Transverse colon (tissue), 4 donors: ENCODE measurements at regions of chr3 and their contacts with region 1.

Region 1: GRCh38 chr3:58414538-58415197 is 19.0 kb downstream of the PDHB start:
- DNase-seq: peak; percentile 31
- H3K4me3 ChIP-seq: no peak overlapping the region
- H3K27ac ChIP-seq: peak overlapping the region in 1 of 4 donors; percentile 19
- H3K4me1 ChIP-seq: peaks cover 2 to 35% (median 13%) of the 10 kb centered on the region in 4 donors
- H3K27me3 ChIP-seq: no peaks in the 10 kb centered on the region
- CTCF ChIP-seq: peak; percentile 76 to 86 (median 85)
- EP300 ChIP-seq: no peak
- POLR2A ChIP-seq: no peak

Region 2: GRCh38 chr3:58177747-58178527 is 236.7 kb before region 1 on chr3:
- in situ Hi-C with region 1: loop called in 1 of 4 experiments (anchors 25 kb)
- intact Hi-C with region 1: no loop called
- DNase-seq: peak; percentile 94
- H3K4me3 ChIP-seq: peak overlapping the region; percentile 18 to 38 (median 34)
- H3K27ac ChIP-seq: peak overlapping the region in 3 of 4 donors; percentile 4 to 50 (median 15)
- H3K4me1 ChIP-seq: peaks cover 28 to 62% (median 45%) of the 10 kb centered on the region in 4 donors
- H3K27me3 ChIP-seq: no peaks in the 10 kb centered on the region
- CTCF ChIP-seq: peak; percentile 90 to 97 (median 96)
- EP300 ChIP-seq: no peak
- POLR2A ChIP-seq: no peak

Region 3: GRCh38 chr3:58324391-58325390 is 90.0 kb before region 1 on chr3:
- in situ Hi-C with region 1: loop called (anchors 5 to 10 kb)
- intact Hi-C with region 1: no loop called
- DNase-seq: no peak
- H3K4me3 ChIP-seq: no peak overlapping the region
- H3K27ac ChIP-seq: peak overlapping the region in 3 of 4 donors; percentile 47 to 66 (median 65)
- H3K4me1 ChIP-seq: peaks cover 3 to 12% (median 10%) of the 10 kb centered on the region in 4 donors
- H3K27me3 ChIP-seq: no peaks in the 10 kb centered on the region
- CTCF ChIP-seq: no peak
- EP300 ChIP-seq: no peak
- POLR2A ChIP-seq: no peak

Region 4: GRCh38 chr3:58332575-58333188 is 82.0 kb before region 1 on chr3 and contains the start of gene PXK:
- in situ Hi-C with region 1: loop called (anchors 5 to 10 kb)
- intact Hi-C with region 1: loop called (anchors 5 kb)
- DNase-seq: peak; percentile 86
- H3K4me3 ChIP-seq: peak within 1 kb of the TSS; percentile 72 to 96 (median 94)
- H3K27ac ChIP-seq: peak within 1 kb of the TSS; percentile 77 to 86 (median 83)
- H3K4me1 ChIP-seq: peaks cover 5 to 36% (median 20%) of the 10 kb centered on the region in 4 donors
- H3K27me3 ChIP-seq: no peaks in the 10 kb centered on the region
- CTCF ChIP-seq: peak in 1 of 5 experiments; percentile 18
- EP300 ChIP-seq: no peak
- POLR2A ChIP-seq: no peak
- total RNA-seq, gene PXK: 7.6 to 29.5 (median 16.6) TPM

Region 5: GRCh38 chr3:58568572-58569286 is 154.1 kb after region 1 on chr3:
- in situ Hi-C with region 1: no loop called
- intact Hi-C with region 1: no loop called
- DNase-seq: peak; percentile 84
- H3K4me3 ChIP-seq: no peak overlapping the region
- H3K27ac ChIP-seq: no peak overlapping the region
- H3K4me1 ChIP-seq: peaks cover 0 to 9% (median under 1%) of the 10 kb centered on the region in 4 donors
- H3K27me3 ChIP-seq: no peaks in the 10 kb centered on the region
- CTCF ChIP-seq: peak; percentile 90 to 96 (median 93)
- EP300 ChIP-seq: no peak
- POLR2A ChIP-seq: no peak